CD4-positive, alpha-beta memory T cell (primary cell): ENCODE measurements at regions of chr2 and their contacts with region 1.

Region 1: GRCh38 chr2:232550354-232551249 is at the starts of genes EIF4E2 and TIGD1:
- DNase-seq: peak; percentile 87 to 92 (median 88)
- H3K4me3 ChIP-seq: peak within 1 kb of the TSS; percentile 79 to 80
- H3K4me3 Mint-ChIP-seq: peak within 1 kb of the TSS; percentile 99 to 100 (median 100)
- H3K27ac ChIP-seq: peak within 1 kb of the TSS; percentile 94
- H3K27ac Mint-ChIP-seq: peak within 1 kb of the TSS; percentile 96 to 100 (median 99)
- H3K4me1 ChIP-seq: peaks cover 77% of the 10 kb centered on the region
- H3K4me1 Mint-ChIP-seq: peaks cover 60 to 91% (median 80%) of the 10 kb centered on the region in 4 donors
- H3K27me3 ChIP-seq: no peaks in the 10 kb centered on the region
- H3K27me3 Mint-ChIP-seq: no peaks in the 10 kb centered on the region
- total RNA-seq, gene EIF4E2: 72.4 to 75.5 TPM
- total RNA-seq, gene TIGD1: 18.9 to 19.3 TPM

Region 2: GRCh38 chr2:232521959-232522622 is 28.5 kb before region 1 on chr2:
- CTCF ChIA-PET with region 1: interaction called, 5 read pairs
- POLR2A ChIA-PET with region 1: interaction called, 4 read pairs
- intact Hi-C with region 1: loop called (anchors 1 kb)
- DNase-seq: peak in 4 of 5 donors; percentile 53 to 63 (median 57)
- H3K4me3 ChIP-seq: peak overlapping the region in 1 of 2 donors; percentile 14
- H3K4me3 Mint-ChIP-seq: peak overlapping the region in 1 of 8 donors; percentile 46
- H3K27ac ChIP-seq: no peak overlapping the region
- H3K27ac Mint-ChIP-seq: no peak overlapping the region
- H3K4me1 ChIP-seq: peaks cover 24% of the 10 kb centered on the region
- H3K4me1 Mint-ChIP-seq: peaks cover 1 to 16% (median 9%) of the 10 kb centered on the region in 4 donors
- H3K27me3 ChIP-seq: peaks cover 14% of the 10 kb centered on the region
- H3K27me3 Mint-ChIP-seq: peaks cover 14 to 27% of the 10 kb centered on the region in 2 donors

Region 3: DNA sequence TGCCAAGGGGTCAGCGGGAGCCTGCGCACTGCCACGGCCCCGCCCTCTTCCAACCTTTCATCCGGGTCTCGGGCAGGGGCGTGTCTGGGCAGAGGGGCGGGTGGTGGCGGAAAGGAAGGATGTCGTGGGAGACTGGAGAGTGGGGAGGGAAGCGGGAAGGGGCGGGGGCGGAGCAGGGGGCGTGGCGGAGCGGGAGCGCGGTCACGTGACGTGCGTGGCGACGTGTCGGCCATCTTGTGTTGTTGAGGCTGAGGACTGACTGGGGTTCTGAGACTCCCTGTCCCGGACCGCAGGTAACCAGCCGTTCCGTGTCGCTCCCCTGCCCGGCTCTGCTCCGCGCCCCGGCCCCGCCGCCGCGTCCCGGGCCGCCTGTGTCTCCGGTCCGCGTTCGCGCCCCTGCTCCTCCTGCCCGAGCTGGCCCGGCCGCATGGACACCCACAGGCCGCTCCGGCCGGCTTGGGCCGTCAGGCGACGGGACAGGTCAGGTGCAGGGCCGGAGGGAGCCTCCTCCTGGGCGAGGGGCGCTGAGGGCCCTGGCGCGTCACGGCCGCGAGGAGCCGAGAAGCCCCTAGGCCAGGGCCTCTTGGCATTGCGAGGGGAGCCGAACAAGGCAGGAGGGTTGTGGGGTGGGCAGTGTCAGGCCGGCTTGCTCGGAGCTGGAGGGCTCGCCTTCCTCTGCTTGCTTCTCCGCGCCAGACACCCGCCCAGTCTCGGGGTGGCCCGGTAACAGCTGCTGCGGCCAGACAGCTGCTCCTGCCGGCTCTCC is 146.7 kb after region 1 on chr2 and contains the start of gene GIGYF2:
- CTCF ChIA-PET with region 1: no interaction called
- POLR2A ChIA-PET with region 1: no interaction called
- intact Hi-C with region 1: loop called (anchors 2 kb)
- DNase-seq: peak; percentile 86 to 91 (median 87)
- H3K4me3 ChIP-seq: peak within 1 kb of the TSS; percentile 55 to 88
- H3K4me3 Mint-ChIP-seq: peak within 1 kb of the TSS; percentile 91 to 96 (median 93)
- H3K27ac ChIP-seq: peak within 1 kb of the TSS; percentile 86
- H3K27ac Mint-ChIP-seq: peak within 1 kb of the TSS; percentile 90 to 95 (median 93)
- H3K4me1 ChIP-seq: peaks cover 40% of the 10 kb centered on the region
- H3K4me1 Mint-ChIP-seq: peaks cover 31 to 52% (median 36%) of the 10 kb centered on the region in 4 donors
- H3K27me3 ChIP-seq: no peaks in the 10 kb centered on the region
- H3K27me3 Mint-ChIP-seq: no peaks in the 10 kb centered on the region
- total RNA-seq, gene GIGYF2: 82.1 to 89.6 TPM